CD8-positive, alpha-beta memory T cell (primary cell): ENCODE measurements at regions of chr6 and their contacts with region 1.

Region 1: DNA sequence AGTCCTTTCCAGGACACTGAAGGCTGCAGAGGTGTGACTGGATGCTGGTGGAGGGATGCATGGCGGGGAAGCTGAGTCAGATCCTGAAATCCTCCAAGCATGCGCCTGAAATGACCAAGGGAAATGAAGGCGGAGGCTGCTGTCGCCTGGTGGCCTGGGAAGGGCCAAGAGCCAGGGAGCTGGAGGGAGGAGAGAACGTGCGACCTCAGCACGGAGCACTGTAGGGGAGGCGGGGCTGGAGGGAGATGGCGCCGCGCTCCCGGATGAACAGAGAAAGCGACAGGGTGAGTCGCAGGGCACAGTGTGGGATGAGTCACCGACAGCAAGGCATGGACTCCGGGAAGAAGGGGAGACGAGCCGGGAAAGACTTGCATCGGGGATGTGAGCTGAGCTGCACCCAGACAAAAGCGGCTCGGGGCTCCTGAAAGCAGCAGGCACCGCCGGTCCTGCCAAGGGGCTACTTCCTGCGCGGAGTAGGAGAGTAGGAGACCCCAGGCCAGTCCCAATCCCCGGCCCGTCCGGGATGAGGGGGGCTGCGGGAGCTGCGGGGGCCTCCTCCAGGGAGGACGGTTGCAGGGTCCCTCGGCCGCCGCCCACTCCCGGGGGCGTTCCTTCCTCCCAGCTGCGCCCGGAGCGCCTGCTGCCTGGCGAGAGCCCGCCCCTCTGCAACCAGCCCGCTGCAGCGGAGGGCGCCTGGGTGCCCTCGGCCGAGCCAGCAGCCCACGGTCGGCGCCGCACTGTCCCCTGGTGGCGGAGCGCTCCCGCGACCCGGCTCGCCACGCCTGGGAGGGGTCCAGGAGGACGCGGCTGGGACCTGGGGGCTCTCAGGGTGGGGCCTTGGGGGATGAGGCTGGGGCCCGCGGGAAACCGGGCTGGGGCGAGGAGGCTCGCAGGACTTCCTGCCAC is 11.0 kb upstream of the NQO2 start:
- DNase-seq: peak; percentile 71 to 86 (median 77)
- H3K4me3 ChIP-seq: peak overlapping the region; percentile 78
- H3K4me3 Mint-ChIP-seq: peak overlapping the region; percentile 87 to 97 (median 96)
- H3K27ac ChIP-seq: peak overlapping the region; percentile 98
- H3K27ac Mint-ChIP-seq: peak overlapping the region; percentile 98 to 100 (median 99)
- H3K4me1 ChIP-seq: peaks cover 23% of the 10 kb centered on the region
- H3K4me1 Mint-ChIP-seq: peaks cover 27 to 38% (median 31%) of the 10 kb centered on the region in 3 donors
- H3K27me3 ChIP-seq: no peaks in the 10 kb centered on the region
- H3K27me3 Mint-ChIP-seq: no peaks in the 10 kb centered on the region

Region 2: DNA sequence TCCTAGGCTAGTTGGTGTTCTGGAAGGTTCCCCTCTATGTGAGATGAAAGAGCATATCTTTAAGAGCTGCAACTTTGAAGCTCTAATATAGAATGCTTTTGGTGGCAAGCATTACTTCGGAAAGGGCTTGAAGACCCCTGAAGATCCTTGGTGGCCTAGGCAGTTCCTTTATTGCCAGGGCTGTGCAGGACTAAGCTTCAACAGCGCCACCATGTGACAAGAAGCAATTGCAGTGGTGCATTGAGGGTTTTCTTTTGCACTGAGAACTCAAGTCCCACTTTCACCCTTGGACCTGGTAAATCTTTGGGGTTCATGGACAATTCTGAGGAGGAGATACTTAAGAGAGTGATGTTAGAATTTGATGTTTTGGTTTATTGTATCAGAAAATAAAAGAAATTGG is 505.9 kb before region 1 on chr6:
- CTCF ChIA-PET with region 1: no interaction called
- POLR2A ChIA-PET with region 1: no interaction called
- DNase-seq: no peak
- H3K4me3 ChIP-seq: no peak overlapping the region
- H3K4me3 Mint-ChIP-seq: no peak overlapping the region
- H3K27ac ChIP-seq: no peak overlapping the region
- H3K27ac Mint-ChIP-seq: no peak overlapping the region
- H3K4me1 ChIP-seq: no peaks in the 10 kb centered on the region
- H3K4me1 Mint-ChIP-seq: no peaks in the 10 kb centered on the region
- H3K27me3 ChIP-seq: no peaks in the 10 kb centered on the region
- H3K27me3 Mint-ChIP-seq: peaks cover 8 to 9% of the 10 kb centered on the region in 2 donors

Region 3: DNA sequence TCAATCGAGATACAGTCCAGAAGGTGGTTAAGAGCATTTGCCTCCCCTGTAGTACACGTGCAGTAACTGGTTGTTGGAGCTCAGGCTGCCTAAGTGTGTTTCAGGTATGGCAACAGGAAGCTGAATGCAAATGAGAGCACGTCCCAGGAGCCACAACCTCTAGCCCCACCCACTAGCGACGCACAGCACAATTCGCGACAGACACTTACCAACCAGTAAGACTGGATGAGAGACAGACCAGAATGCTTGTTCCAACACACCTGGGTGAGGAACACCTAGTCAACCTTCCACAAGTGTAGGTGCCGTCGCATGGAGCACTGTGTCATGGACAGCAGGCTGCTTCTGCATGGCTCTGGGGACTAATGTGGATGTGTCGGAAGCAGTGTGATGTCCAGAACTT is 139.8 kb before region 1 on chr6:
- CTCF ChIA-PET with region 1: interaction called, 41 read pairs
- POLR2A ChIA-PET with region 1: interaction called, 18 read pairs
- DNase-seq: peak; percentile 19 to 77 (median 55)
- H3K4me3 ChIP-seq: no peak overlapping the region
- H3K4me3 Mint-ChIP-seq: peak overlapping the region in 5 of 7 donors; percentile 4 to 62 (median 30)
- H3K27ac ChIP-seq: no peak overlapping the region
- H3K27ac Mint-ChIP-seq: peak overlapping the region in 7 of 8 donors; percentile 1 to 94 (median 89)
- H3K4me1 ChIP-seq: peaks cover 31% of the 10 kb centered on the region
- H3K4me1 Mint-ChIP-seq: peaks cover 32 to 44% (median 34%) of the 10 kb centered on the region in 3 donors
- H3K27me3 ChIP-seq: no peaks in the 10 kb centered on the region
- H3K27me3 Mint-ChIP-seq: no peaks in the 10 kb centered on the region

Region 4: GRCh38 chr6:2931970-2932748 is 56.5 kb before region 1 on chr6:
- CTCF ChIA-PET with region 1: interaction called, 102 read pairs
- POLR2A ChIA-PET with region 1: interaction called, 21 read pairs
- DNase-seq: peak; percentile 70 to 88 (median 74)
- H3K4me3 ChIP-seq: peak overlapping the region; percentile 24
- H3K4me3 Mint-ChIP-seq: peak overlapping the region in 2 of 7 donors; percentile 29 to 41
- H3K27ac ChIP-seq: no peak overlapping the region
- H3K27ac Mint-ChIP-seq: peak overlapping the region in 6 of 8 donors; percentile 1 to 41 (median 27)
- H3K4me1 ChIP-seq: peaks cover 20% of the 10 kb centered on the region
- H3K4me1 Mint-ChIP-seq: peaks cover 22 to 26% (median 23%) of the 10 kb centered on the region in 3 donors
- H3K27me3 ChIP-seq: no peaks in the 10 kb centered on the region
- H3K27me3 Mint-ChIP-seq: no peaks in the 10 kb centered on the region

Region 5: DNA sequence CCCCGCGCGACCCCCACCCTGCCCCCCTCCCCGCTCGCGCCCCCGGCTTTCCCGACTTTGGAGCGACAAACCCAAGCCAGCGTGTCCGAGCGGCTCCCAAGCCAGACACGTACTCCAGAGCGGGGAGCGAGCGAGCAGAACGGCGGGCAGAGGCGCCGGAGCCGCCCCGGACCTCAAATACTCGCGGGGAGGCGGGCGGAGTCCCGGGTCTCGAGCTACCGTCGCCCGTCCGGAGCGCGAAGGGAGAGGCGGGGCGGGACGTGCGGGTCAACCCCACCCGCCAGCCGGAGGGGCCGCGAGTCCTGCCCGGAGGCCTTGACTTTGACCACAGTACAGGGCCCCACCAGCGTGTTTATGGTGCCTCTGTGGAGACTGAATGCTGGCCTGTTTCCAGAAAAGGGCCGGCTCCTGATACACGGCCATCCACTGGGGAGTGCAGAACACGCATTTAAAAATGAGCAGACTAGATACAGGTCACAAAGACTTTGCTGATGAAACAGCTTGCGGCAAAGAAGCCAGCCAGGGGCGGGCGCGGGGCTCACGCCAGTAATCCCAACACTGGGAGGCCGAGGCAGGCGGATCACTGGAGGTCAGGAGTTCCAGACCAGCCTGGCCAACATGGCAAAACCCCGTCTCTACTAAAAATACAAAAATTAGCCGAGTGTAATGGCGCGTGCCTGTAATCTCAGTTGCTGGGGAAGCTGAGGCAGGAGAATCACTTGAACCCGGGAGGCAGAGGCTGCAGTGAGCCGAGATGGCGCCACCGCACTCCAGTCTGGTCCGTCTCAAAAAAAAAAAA is 17.1 kb before region 1 on chr6 and contains the start of gene SERPINB6:
- CTCF ChIA-PET with region 1: interaction called, 65 read pairs
- POLR2A ChIA-PET with region 1: interaction called, 32 read pairs
- DNase-seq: peak; percentile 23 to 62 (median 39)
- H3K4me3 ChIP-seq: peak within 1 kb of the TSS; percentile 63
- H3K4me3 Mint-ChIP-seq: peak within 1 kb of the TSS; percentile 88 to 95 (median 92)
- H3K27ac ChIP-seq: peak within 1 kb of the TSS; percentile 81
- H3K27ac Mint-ChIP-seq: peak within 1 kb of the TSS; percentile 85 to 98 (median 92)
- H3K4me1 ChIP-seq: peaks cover 26% of the 10 kb centered on the region
- H3K4me1 Mint-ChIP-seq: peaks cover 42 to 70% (median 48%) of the 10 kb centered on the region in 3 donors
- H3K27me3 ChIP-seq: no peaks in the 10 kb centered on the region
- H3K27me3 Mint-ChIP-seq: peaks cover 0 to 6% of the 10 kb centered on the region in 2 donors
- total RNA-seq, gene SERPINB6: 62.1 to 66.0 TPM

Region 6: GRCh38 chr6:3052481-3053230 is 64.0 kb after region 1 on chr6:
- CTCF ChIA-PET with region 1: interaction called, 15 read pairs
- POLR2A ChIA-PET with region 1: interaction called, 7 read pairs
- DNase-seq: no peak
- H3K4me3 ChIP-seq: peak overlapping the region; percentile 59
- H3K4me3 Mint-ChIP-seq: peak overlapping the region; percentile 60 to 92 (median 80)
- H3K27ac ChIP-seq: peak overlapping the region; percentile 69
- H3K27ac Mint-ChIP-seq: peak overlapping the region in 5 of 8 donors; percentile 13 to 86 (median 63)
- H3K4me1 ChIP-seq: peaks cover 7% of the 10 kb centered on the region
- H3K4me1 Mint-ChIP-seq: peaks cover 9 to 30% (median 10%) of the 10 kb centered on the region in 3 donors
- H3K27me3 ChIP-seq: no peaks in the 10 kb centered on the region
- H3K27me3 Mint-ChIP-seq: peaks cover 5 to 8% of the 10 kb centered on the region in 2 donors

Region 7: GRCh38 chr6:3258720-3259490 is 270.2 kb after region 1 on chr6 and contains the start of gene PSMG4:
- CTCF ChIA-PET with region 1: no interaction called
- POLR2A ChIA-PET with region 1: no interaction called
- DNase-seq: peak; percentile 87 to 92 (median 92)
- H3K4me3 ChIP-seq: peak within 1 kb of the TSS; percentile 59
- H3K4me3 Mint-ChIP-seq: peak within 1 kb of the TSS; percentile 91 to 100 (median 96)
- H3K27ac ChIP-seq: peak within 1 kb of the TSS; percentile 65
- H3K27ac Mint-ChIP-seq: peak within 1 kb of the TSS; percentile 85 to 99 (median 96)
- H3K4me1 ChIP-seq: peaks cover 33% of the 10 kb centered on the region
- H3K4me1 Mint-ChIP-seq: peaks cover 38 to 47% (median 47%) of the 10 kb centered on the region in 3 donors
- H3K27me3 ChIP-seq: no peaks in the 10 kb centered on the region
- H3K27me3 Mint-ChIP-seq: peaks cover 0 to 6% of the 10 kb centered on the region in 2 donors
- total RNA-seq, gene PSMG4: 24.4 to 25.2 TPM